ENCODE measurements at regions of chr2 and their contacts with region 1.

Region 1: DNA sequence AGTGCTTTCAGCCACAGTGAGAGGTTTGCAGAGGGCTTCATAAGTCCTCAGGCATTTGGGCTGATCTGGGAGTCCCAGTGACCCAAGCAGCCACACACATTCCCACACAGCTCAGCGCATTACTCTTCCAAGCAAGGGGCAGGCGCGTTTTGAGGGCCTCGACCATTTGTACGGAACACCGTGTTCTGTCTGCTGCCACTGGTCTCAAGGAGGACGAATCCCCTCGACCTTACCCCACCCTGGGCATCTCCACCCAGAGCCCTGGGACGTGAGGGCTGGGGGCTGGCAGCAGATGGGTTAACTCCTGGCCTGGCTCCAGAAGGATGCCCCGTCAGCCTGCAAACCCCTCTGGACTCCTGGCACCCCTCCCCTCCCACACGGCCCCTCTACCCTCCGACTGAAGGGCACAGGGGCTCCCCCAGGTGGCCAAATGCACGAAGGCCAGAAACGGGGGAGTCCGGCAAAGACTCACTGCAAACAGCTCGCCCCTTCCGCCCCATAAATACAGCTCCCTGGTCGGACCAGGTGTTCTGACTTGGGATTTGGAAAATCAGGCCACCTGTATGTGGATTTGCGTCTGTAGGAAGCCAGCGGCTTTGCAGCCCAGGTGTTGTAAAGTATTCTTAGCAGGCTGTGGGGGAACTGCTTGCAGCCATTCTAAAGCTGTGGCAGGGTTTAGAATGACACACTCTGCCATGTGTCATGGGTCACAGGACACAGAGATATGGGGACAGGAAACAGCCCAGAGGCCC is 33.6 kb upstream of the PTMA start:
- DNase-seq: peak; percentile 85
- H3K4me3 ChIP-seq: no peak overlapping the region
- H3K27ac ChIP-seq: peak overlapping the region; percentile 95
- H3K4me1 ChIP-seq: peaks cover 27% of the 10 kb centered on the region
- H3K27me3 ChIP-seq: no peaks in the 10 kb centered on the region
- CTCF ChIP-seq: peak; percentile 81

Region 2: GRCh38 chr2:231475965-231476364 is 198.8 kb before region 1 on chr2:
- intact Hi-C with region 1: no loop called
- DNase-seq: no peak
- H3K4me3 ChIP-seq: no peak overlapping the region
- H3K27ac ChIP-seq: no peak overlapping the region
- H3K4me1 ChIP-seq: no peaks in the 10 kb centered on the region
- H3K27me3 ChIP-seq: no peaks in the 10 kb centered on the region
- CTCF ChIP-seq: no peak

Region 3: GRCh38 chr2:231514103-231514950 is 160.4 kb before region 1 on chr2:
- intact Hi-C with region 1: no loop called
- DNase-seq: peak; percentile 98
- H3K4me3 ChIP-seq: peak overlapping the region; percentile 49
- H3K27ac ChIP-seq: peak overlapping the region; percentile 66
- H3K4me1 ChIP-seq: no peaks in the 10 kb centered on the region
- H3K27me3 ChIP-seq: no peaks in the 10 kb centered on the region
- CTCF ChIP-seq: no peak

Region 4: GRCh38 chr2:231612179-231613053 is 62.3 kb before region 1 on chr2:
- intact Hi-C with region 1: loop called (anchors 2 kb)
- DNase-seq: peak; percentile 97
- H3K4me3 ChIP-seq: no peak overlapping the region
- H3K27ac ChIP-seq: peak overlapping the region; percentile 94
- H3K4me1 ChIP-seq: peaks cover 33% of the 10 kb centered on the region
- H3K27me3 ChIP-seq: no peaks in the 10 kb centered on the region
- CTCF ChIP-seq: peak; percentile 96

Region 5: GRCh38 chr2:231648587-231649174 is 26.1 kb before region 1 on chr2:
- intact Hi-C with region 1: loop called (anchors 2 kb)
- DNase-seq: peak; percentile 91
- H3K4me3 ChIP-seq: no peak overlapping the region
- H3K27ac ChIP-seq: no peak overlapping the region
- H3K4me1 ChIP-seq: peaks cover 8% of the 10 kb centered on the region
- H3K27me3 ChIP-seq: no peaks in the 10 kb centered on the region
- CTCF ChIP-seq: peak; percentile 69

Region 6: DNA sequence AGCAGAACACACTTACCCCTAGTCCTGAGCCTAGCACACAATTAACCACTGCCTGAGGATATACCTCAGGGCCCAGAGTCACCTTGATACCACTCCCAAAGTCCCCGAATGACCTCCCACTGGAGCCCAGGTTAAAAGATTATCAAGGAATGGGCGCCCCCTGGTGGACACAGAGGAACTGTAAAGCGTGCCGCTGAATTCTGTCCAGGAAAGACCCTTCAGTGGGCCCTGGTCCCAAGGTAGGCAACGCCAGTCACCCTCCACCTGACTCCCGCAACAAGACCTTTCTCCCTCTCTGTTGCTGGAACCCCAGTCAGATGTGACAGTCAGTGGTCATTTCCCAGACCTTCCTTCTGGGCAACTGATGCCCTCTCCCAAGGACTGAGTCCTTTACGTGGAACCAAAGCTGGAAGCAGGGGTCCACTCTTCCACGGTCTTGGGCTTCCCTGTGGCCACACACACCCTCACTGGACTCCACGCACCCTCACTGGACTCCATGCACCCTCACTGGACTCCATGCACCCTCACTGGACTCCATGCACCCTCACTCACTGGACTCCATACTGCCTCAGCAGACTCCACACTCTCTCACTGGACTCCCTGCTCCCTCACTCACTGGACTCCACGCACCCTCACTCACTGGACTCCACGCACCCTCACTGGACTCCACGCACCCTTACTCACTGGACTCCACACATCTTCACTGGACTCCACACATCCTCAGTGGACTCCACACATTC is 40.7 kb after region 1 on chr2:
- intact Hi-C with region 1: loop called (anchors 1 kb)
- DNase-seq: peak; percentile 84
- H3K4me3 ChIP-seq: no peak overlapping the region
- H3K27ac ChIP-seq: no peak overlapping the region
- H3K4me1 ChIP-seq: peaks cover 13% of the 10 kb centered on the region
- H3K27me3 ChIP-seq: no peaks in the 10 kb centered on the region
- CTCF ChIP-seq: peak; percentile 88

Region 7: DNA sequence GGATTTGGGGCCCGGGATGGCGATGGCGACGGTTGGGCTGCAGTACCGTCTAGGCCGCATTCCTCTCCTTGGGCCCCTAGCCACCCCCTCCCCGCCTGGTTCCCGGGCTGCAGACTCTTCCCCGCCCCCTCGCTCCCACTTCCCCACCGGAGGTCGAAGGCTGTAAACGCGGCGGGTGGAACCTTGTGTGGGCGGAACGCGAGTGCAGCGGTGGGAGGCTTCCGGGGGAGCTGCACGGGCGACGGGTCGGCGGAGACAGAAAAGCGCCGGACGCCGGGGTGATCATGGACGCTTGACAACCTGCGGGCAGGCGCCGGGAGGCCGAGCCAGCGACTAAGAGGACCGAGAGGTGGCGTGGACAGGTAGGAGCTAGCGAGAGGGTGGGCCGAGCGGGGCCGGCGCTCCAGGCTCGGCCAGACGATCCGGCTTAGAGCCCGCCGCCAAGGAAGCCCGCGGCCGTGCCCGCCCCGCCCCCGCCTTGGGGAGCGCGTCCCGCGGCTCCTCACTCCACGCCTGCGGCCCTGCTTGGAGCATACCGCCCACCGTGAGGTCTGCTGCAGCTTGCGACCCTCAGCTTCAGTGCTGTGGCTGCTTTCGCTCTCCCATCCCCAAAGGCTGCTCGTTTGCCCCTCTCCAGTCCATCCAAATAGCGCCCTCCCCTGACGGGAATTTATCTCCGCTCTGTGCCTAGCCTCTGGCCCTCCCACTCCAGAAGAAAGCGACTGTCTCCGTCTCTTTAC is 111.6 kb after region 1 on chr2 and contains the start of gene COPS7B:
- intact Hi-C with region 1: no loop called
- DNase-seq: peak; percentile 85
- H3K4me3 ChIP-seq: peak within 1 kb of the TSS; percentile 99
- H3K27ac ChIP-seq: peak within 1 kb of the TSS; percentile 35
- H3K4me1 ChIP-seq: peaks cover 10% of the 10 kb centered on the region
- H3K27me3 ChIP-seq: no peaks in the 10 kb centered on the region
- CTCF ChIP-seq: no peak
- total RNA-seq, gene COPS7B: 18.3 to 33.3 TPM

Region 8: DNA sequence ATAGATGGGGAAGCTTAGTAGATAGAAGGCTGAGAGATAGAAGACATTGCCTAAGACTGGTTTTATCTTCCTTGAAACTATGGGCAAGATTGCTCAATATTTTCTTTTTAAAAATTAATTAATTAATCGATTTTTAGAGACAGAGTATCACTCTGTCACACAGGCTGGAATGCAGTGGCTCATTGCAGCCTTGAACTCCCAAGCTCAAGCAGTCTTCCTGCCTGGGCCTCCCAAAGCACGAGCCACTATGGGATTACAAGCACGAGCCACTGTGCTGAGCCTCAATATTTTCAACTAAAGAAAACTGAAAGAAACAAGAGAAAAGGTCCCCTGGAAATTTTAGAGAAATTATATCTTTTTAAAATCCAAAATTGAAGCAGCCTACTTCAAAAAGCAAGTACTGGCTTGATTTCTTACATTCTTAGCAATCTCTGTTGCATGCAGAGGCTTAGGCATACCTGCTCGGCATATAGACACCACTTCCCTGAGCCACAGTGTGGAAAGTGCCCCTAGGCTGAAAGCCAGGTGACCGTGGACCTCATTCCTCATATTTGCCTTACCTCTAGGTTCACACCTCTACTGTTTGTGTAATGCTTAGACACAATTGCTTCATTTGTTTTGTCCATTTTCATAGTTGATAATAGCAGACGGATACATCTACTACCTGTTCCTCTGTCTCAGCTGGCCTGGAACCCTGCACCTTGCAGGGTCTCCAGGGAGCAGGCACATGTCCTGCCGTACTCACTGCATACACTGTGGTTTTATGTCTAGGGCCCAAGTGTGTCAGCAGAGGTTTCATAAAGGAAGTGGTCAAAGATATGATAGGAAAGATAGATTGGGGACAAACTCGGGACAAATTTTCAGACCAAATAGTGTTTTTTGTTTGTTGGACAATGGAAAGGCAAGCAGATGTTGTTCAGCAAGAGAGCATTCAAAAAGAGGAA is 537.3 kb after region 1 on chr2:
- intact Hi-C with region 1: no loop called
- DNase-seq: no peak
- H3K4me3 ChIP-seq: no peak overlapping the region
- H3K27ac ChIP-seq: no peak overlapping the region
- H3K4me1 ChIP-seq: no peaks in the 10 kb centered on the region
- H3K27me3 ChIP-seq: no peaks in the 10 kb centered on the region
- CTCF ChIP-seq: no peak